ENCODE measurements at regions of chr1 and their contacts with region 1.

Region 1: DNA sequence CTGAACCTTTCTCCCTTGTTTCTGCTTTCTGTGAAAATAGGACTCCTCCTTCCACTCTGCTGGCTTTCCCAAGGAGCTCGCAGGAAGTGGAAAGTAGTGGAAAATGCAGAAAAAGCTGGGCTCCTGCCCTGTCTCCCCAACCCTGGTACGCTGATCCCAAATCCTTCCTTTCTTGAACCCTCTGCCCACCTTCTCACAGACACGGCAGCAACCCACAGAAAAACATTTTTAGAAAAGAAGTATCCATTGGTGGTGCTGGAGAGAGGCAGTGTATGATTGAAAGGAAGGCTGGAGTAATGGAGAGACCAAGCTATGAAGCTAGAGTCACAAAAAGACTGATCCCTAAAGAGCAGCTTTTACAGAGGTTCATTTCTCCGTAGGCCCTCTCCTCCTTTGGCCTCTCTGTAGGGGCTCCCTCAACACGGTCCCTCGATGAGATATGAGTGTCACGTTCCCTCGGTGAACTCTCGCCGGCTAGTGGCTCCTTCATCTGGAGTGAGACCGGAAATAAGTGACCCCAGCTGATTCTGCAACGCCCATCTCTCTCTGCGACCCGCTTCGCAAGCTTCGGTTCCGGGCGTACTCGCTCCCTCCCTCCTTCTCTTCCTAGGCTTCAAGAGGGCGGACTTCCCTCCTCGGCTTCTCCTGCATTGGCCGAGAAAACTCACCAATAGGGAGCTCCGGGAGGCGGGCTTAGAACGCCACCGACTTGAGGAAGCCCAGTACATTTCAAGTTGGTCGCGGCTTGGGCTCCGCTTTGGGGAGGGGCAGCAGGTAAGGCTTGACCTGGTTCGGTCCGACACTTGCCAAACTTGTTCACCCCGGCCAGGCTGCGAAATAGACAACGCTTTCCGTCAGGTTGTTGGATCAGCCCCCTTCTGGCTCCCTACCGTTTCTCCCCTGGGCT is at the starts of genes ANKRD34A and POLR3GL:
- DNase-seq: peak; percentile 86
- H3K4me3 ChIP-seq: peak within 1 kb of the TSS; percentile 77 to 78
- H3K27ac ChIP-seq: peak within 1 kb of the TSS; percentile 83 to 98
- H3K4me1 ChIP-seq: peaks cover 19 to 40% of the 10 kb centered on the region in 2 experiments
- H3K27me3 ChIP-seq: no peaks in the 10 kb centered on the region
- CTCF ChIP-seq: no peak
- EP300 ChIP-seq: no peak
- RAD21 ChIP-seq: no peak
- polyA plus RNA-seq, gene ANKRD34A: 2.6 and 3.6 TPM in 2 replicates
- polyA plus RNA-seq, gene POLR3GL: 15.8 and 17.3 TPM in 2 replicates

Region 2: DNA sequence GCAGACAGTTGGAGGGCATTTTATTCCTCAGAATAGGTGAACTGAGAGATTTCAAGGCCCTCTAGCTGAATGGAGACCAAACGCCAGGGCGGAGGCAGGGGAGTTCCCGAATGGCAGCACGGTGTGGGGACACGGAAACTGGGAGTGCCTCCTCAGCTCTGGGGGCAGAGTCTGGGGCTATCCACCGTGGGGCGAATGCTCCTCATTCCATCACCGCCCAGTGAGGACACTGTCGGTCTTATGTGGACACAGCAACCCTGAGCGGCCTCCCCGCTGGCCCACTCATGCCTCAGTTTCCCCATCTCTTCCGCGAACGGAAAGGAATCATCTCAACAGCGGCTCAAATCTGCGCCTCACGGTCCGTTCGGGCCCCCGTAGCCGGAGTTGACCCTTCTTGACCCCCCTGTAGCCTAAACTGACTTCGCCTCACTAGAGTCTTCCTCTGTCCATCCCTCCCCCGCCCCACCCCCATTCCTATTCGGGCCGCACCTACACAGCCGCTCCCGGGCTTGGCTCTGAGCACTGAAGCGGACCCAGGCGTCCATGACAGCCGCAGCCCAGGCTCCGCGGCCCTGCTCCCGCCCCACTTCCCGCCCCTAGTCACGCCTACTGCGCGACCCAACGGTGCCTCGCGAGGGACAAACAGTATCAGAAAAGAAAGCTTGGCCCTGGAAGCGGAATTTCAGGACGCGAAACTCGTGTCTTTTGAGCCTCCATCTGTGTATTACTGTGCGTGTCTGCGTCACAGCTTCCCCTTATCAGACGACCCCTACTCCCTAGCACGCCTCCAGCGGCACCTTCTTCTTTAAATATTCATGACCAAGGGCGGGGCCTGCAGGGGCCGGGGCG is 45.9 kb before region 1 on chr1 and contains the start of gene PEX11B:
- CTCF ChIA-PET with region 1: interaction called, 3 read pairs
- POLR2A ChIA-PET with region 1: interaction called, 10 read pairs
- DNase-seq: peak; percentile 90
- H3K4me3 ChIP-seq: peak within 1 kb of the TSS; percentile 83 to 86
- H3K27ac ChIP-seq: peak within 1 kb of the TSS; percentile 85 to 95
- H3K4me1 ChIP-seq: peaks cover 0 to 18% of the 10 kb centered on the region in 2 experiments; a peak in 2 of 4 replicates
- H3K27me3 ChIP-seq: no peaks in the 10 kb centered on the region
- CTCF ChIP-seq: no peak
- EP300 ChIP-seq: no peak
- RAD21 ChIP-seq: no peak
- polyA plus RNA-seq, gene PEX11B: 26.1 and 34.5 TPM in 2 replicates

Region 3: DNA sequence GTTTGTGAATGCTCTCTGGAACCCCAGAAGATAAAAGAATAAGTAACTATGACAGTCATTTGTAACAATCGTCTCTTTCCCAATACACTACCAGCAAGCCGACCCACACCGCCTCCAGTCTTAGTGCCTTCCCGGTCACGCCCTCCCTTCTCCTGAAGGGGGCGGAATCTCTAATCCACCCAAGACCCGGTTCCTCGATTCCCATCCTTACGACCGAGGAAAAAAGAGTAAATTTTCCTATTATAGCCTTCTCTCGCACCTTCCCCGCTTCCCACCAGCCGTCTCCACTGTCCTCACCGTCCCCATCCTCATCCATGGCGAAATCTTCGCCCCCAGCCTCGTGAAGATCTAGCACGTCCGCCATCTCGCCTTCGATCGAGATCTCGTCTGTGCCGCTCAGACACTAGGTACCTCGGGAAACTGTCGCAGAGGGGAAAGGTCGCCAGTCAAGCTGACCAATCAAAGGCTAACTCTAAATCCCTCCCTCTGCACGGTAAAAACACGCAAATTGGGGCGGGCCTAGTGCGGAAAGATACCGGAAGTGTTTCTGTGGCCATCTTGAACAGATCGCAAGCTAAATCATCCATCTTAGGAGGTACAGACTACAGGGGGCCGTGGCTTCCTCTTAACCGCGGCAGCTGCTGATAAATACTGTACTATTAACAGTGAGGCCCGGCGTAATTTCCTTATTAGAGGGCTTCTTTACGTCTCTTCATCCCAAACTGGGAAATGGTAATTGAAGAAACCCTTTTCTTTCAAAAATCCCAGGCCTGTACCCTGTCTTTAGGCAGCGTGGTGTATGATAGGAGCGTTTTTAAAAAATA is 37.0 kb before region 1 on chr1 and contains the start of gene RBM8A:
- CTCF ChIA-PET with region 1: interaction called, 5 read pairs
- POLR2A ChIA-PET with region 1: interaction called, 31 read pairs
- DNase-seq: peak; percentile 83
- H3K4me3 ChIP-seq: peak within 1 kb of the TSS; percentile 80 to 82
- H3K27ac ChIP-seq: peak within 1 kb of the TSS; percentile 95 to 96
- H3K4me1 ChIP-seq: peaks cover 7% of the 10 kb centered on the region in 2 experiments
- H3K27me3 ChIP-seq: no peaks in the 10 kb centered on the region
- CTCF ChIP-seq: peak; percentile 75
- EP300 ChIP-seq: 0 out of 4 replicates have a peak, but pooled peaks of 1 of the 2 experiments have one; percentile 1
- RAD21 ChIP-seq: peak; percentile 23; the same call in 1 of the 2 replicates
- polyA plus RNA-seq, gene RBM8A: 236 TPM in 2 replicates